B cell (primary cell): ENCODE measurements at regions of chr22 and their contacts with region 1.

Region 1: GRCh38 chr22:21759646-21760376 is 24.2 kb upstream of the YPEL1 start:
- DNase-seq: no peak
- ATAC-seq: no peak
- H3K4me3 ChIP-seq: no peak overlapping the region
- H3K4me3 Mint-ChIP-seq: no peak overlapping the region
- H3K27ac ChIP-seq: no peak overlapping the region
- H3K27ac Mint-ChIP-seq: no peak overlapping the region
- H3K4me1 ChIP-seq: peaks cover 4 to 10% of the 10 kb centered on the region in 2 donors
- H3K4me1 Mint-ChIP-seq: peaks cover 13% of the 10 kb centered on the region
- H3K27me3 ChIP-seq: no peaks in the 10 kb centered on the region
- H3K27me3 Mint-ChIP-seq: no peaks in the 10 kb centered on the region
- CTCF ChIP-seq: no peak

Region 2: GRCh38 chr22:21778705-21779363 is 19.0 kb after region 1 on chr22:
- CTCF ChIA-PET with region 1: no interaction called
- POLR2A ChIA-PET with region 1: interaction called, 10 read pairs
- intact Hi-C with region 1: no loop called
- DNase-seq: no peak
- ATAC-seq: no peak
- H3K4me3 ChIP-seq: no peak overlapping the region
- H3K4me3 Mint-ChIP-seq: no peak overlapping the region
- H3K27ac ChIP-seq: no peak overlapping the region
- H3K27ac Mint-ChIP-seq: peak overlapping the region; percentile 26
- H3K4me1 ChIP-seq: peaks cover 7 to 10% of the 10 kb centered on the region in 2 donors
- H3K4me1 Mint-ChIP-seq: peaks cover 6% of the 10 kb centered on the region
- H3K27me3 ChIP-seq: no peaks in the 10 kb centered on the region
- H3K27me3 Mint-ChIP-seq: no peaks in the 10 kb centered on the region
- CTCF ChIP-seq: no peak